ENCODE measurements at regions of chr4 and their contacts with region 1.

Region 1: GRCh38 chr4:89528526-89529133 is 221.0 kb upstream of the GPRIN3 start:
- DNase-seq: no peak
- H3K4me3 ChIP-seq: no peak overlapping the region
- H3K27ac ChIP-seq: no peak overlapping the region
- H3K27me3 ChIP-seq: no peaks in the 10 kb centered on the region
- CTCF ChIP-seq: no peak

Region 2: GRCh38 chr4:89404531-89404930 is 124.1 kb before region 1 on chr4:
- CTCF ChIA-PET with region 1: no interaction called
- POLR2A ChIA-PET with region 1: no interaction called
- DNase-seq: no peak
- H3K4me3 ChIP-seq: no peak overlapping the region
- H3K27ac ChIP-seq: no peak overlapping the region
- H3K27me3 ChIP-seq: no peaks in the 10 kb centered on the region
- CTCF ChIP-seq: no peak

Region 3: DNA sequence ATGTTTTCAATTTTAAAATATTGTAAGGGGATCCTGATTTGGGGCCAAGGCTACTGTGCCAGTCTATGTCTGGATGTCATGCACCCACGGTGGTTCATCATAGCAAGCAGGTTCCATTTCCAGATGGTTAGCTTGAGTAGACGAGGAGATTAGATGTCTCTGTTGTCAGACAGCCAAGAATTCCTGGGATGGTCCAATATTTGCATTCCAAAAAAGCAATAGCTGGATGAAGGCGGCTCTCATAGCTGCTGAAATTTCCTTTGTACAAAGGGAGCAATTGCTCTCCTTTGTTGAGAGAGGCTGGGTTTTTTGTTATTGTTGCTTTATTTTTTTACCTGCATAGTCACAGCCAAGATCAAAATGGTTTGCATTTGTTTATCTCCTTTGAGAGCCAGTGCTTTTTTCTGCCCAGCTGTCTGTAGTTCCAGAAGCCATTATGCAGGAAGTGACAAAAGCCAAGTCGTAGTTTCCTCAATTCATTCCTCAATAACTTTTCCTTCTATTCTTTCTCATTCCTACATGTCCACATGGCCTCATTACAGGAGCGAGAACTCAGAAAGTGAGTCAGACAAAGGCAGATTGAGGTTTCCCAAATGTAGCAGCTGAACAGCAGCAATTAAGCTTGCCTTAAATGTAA is 473.9 kb after region 1 on chr4:
- CTCF ChIA-PET with region 1: no interaction called
- POLR2A ChIA-PET with region 1: no interaction called
- DNase-seq: no peak
- H3K4me3 ChIP-seq: no peak overlapping the region
- H3K27ac ChIP-seq: no peak overlapping the region
- H3K27me3 ChIP-seq: no peaks in the 10 kb centered on the region
- CTCF ChIP-seq: no peak

Region 4: DNA sequence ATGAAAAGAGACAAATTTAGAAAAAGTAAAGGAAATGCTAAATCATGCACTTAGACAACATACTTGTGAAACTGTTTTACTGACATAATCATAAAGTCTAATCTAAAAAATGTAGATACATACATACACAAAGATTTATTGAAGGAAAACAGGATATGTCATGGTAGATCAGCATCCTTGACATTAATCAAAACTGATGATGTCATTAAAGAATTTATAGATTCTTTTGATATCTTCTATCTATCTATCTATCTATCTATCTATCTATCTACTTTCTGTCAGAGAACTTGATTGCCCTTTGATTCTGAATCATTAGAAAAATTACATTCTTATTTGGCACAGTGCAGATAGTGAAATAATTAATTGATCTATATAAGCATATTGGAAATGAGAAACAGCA is 909.9 kb after region 1 on chr4:
- CTCF ChIA-PET with region 1: interaction called, 11 read pairs
- POLR2A ChIA-PET with region 1: no interaction called
- DNase-seq: no peak
- H3K4me3 ChIP-seq: no peak overlapping the region
- H3K27ac ChIP-seq: no peak overlapping the region
- H3K27me3 ChIP-seq: no peaks in the 10 kb centered on the region
- CTCF ChIP-seq: no peak

Measured in AG04450 (cell line).